OCI-LY7 (cell line): ENCODE measurements at regions of chr11 and their contacts with region 1.

Region 1: DNA sequence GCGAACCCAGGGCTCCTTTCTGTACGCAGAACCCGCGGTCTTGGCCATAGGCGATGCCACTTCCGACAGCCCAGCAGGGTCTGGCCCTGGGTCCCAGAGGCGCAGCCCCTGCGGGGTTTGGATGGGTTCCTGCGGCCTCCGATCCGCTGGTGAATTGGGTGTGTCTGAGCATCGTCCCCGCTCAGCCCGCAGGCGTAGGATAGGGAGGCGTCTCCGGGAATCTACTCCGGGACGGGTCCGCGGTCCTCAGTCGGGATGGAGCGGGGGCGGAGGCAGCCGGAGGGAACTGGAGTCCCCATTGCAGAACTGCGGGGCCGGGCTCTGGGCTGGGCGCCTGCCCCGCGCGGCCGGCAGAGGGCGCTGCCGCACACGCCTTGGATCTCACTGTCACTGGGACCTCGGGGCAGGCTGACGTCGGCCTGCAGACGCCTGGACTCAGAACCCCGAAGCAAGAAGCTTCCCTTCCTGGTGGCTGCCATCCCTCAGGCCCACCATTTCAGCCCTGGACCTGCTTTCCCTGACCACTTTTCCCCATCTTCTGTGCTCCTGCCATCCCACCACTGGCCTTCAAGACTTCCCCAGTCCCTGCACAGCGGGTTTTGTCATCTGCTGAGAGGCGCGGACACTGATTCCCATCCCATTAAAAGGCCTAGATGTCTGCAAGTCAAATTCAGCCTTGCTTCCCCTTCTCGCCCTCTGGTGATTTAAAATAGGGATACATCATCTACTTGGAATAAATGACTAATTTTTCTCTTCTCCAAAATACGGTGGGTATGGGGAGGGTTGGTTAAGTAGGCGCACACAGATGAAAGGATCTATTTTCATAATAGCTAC is 38.3 kb upstream of the CREB3L1 start:
- DNase-seq: peak; percentile 76
- H3K4me3 ChIP-seq: no peak overlapping the region
- H3K27ac ChIP-seq: no peak overlapping the region
- H3K4me1 ChIP-seq: peaks cover 18% of the 10 kb centered on the region
- CTCF ChIP-seq: peak; percentile 91

Region 2: DNA sequence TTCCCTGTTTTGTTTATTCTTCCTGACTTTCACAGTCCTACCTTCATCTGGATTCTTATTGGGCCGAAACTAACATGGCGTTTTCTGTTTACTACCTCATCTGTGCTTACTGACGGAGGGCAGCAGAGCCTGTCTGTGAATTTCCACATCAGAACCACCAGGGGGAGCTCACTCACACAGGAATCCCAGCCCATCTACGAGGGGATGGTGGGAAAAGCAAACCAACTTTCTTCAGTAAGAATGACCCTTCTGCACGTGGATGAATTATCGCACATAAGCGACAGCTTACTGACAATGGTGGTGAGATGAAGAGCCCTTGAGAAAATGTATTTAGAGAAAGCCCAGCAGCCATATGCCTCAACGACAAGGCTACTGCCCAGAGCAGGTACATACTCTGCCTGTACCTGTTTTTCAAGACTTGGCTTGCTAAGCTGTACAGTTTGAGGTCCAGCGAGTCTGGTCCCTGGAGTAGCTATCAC is 274.2 kb before region 1 on chr11:
- CTCF ChIA-PET with region 1: no interaction called
- POLR2A ChIA-PET with region 1: no interaction called
- intact Hi-C with region 1: no loop called
- DNase-seq: peak; percentile 71
- H3K4me3 ChIP-seq: no peak overlapping the region
- H3K27ac ChIP-seq: no peak overlapping the region
- H3K4me1 ChIP-seq: no peaks in the 10 kb centered on the region
- CTCF ChIP-seq: peak; percentile 99

Region 3: GRCh38 chr11:46308631-46309419 is 69.6 kb after region 1 on chr11:
- CTCF ChIA-PET with region 1: interaction called, 22 read pairs
- POLR2A ChIA-PET with region 1: interaction called, 24 read pairs
- intact Hi-C with region 1: loop called (anchors 1 kb)
- DNase-seq: peak; percentile 70
- H3K4me3 ChIP-seq: no peak overlapping the region
- H3K27ac ChIP-seq: no peak overlapping the region
- H3K4me1 ChIP-seq: peaks cover 6% of the 10 kb centered on the region
- CTCF ChIP-seq: peak; percentile 91

Region 4: GRCh38 chr11:46315033-46315738 is 76.0 kb after region 1 on chr11:
- CTCF ChIA-PET with region 1: interaction called, 22 read pairs
- POLR2A ChIA-PET with region 1: interaction called, 24 read pairs
- intact Hi-C with region 1: loop called (anchors 1 kb)
- DNase-seq: peak; percentile 79
- H3K4me3 ChIP-seq: no peak overlapping the region
- H3K27ac ChIP-seq: no peak overlapping the region
- H3K4me1 ChIP-seq: peaks cover 14% of the 10 kb centered on the region
- CTCF ChIP-seq: peak; percentile 93

Region 5: GRCh38 chr11:46529095-46529905 is 290.1 kb after region 1 on chr11:
- CTCF ChIA-PET with region 1: no interaction called
- POLR2A ChIA-PET with region 1: no interaction called
- intact Hi-C with region 1: loop called (anchors 10 kb)
- DNase-seq: peak; percentile 76
- H3K4me3 ChIP-seq: no peak overlapping the region
- H3K27ac ChIP-seq: no peak overlapping the region
- H3K4me1 ChIP-seq: peaks cover 15% of the 10 kb centered on the region
- CTCF ChIP-seq: peak; percentile 96